Aorta (tissue), 5 donors: ENCODE measurements at regions of chr5 and their contacts with region 1.

Region 1: DNA sequence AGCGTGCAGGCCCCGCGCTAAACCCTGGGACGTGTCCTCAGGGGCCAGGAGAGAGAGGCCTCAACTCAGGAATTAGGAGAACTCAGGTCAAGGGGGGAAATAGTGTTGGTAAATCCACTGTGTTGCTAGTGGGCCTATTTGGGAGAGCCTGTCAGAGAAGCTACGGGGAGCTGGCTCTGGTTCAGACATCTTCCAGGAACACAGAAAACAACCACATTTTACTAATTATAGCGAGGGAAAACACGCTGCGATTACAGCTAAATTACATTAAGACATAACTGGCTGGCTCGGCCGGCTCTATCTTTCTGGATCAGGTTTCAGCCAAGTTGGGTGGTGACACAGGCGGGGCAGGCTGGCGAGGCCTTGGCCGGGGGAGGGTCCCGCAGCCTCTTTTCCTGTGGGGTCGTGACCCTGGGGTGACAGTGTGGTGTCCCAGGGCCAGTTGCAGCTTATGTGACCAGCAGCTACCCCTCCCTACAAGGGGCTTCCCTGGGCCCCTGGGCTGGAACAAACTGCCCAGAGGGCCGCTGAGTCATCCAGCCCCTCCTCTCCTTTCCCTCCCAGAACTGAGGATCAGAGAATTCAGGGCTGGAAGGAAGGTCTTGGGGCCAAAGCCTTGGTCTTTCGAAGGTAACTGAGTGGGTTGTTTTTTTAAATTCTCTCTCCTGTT is 75.1 kb downstream of the FGF18 start:
- DNase-seq: peak; percentile 85 to 90
- ATAC-seq: peak; percentile 91
- H3K4me3 ChIP-seq: no peak overlapping the region
- H3K27ac ChIP-seq: peak overlapping the region; percentile 63 to 94
- H3K4me1 ChIP-seq: peaks cover 0 to 2% of the 10 kb centered on the region in 2 donors
- H3K27me3 ChIP-seq: no peaks in the 10 kb centered on the region

Region 2: DNA sequence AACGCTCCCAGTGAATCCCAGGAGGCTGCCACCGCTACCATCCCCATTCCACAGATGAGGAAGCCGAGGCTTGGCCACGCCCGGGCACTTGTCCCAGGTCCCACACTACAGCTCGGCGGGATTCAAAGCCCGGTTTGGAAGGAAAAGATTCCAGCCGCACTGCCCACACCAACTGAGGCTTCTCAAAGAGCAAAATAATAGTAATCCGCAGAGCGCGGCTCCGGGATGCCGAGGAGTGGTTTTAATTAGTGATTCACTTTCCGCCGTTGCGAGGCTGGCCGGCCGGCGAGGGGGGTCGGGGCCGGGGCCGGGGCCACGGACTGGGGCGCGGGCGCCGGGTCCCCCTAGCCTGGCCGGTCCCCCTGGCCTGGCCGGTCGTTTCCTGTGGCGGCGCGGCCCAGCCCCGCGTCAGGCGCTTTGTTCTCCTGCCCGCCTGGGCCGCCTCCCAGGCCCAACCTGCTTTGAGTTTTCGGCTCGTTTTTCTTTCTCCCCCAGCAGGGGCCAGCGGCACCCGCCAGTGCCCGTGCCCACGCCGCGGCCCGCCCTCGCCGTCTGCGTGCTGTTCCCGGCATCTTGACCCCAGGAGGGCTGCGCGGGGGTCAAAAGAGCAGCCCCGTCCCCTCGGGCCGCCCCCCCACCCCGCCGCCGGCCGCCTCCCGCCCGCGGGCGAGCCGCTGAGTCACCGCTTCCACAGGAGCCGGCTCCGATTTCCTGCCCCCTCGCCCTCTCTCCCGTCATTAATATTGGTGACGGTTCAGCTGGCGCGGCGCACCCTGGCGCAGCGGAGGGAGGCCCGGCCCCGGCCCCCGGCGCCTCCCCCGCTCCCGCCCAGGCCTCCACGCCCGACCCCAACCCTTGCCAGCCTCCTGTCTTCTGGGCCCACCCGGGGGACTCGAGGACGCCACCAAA is 43.9 kb before region 1 on chr5:
- intact Hi-C with region 1: loop called in 1 of 2 experiments (anchors 5 kb)
- DNase-seq: peak; percentile 87 to 95
- ATAC-seq: peak; percentile 83
- H3K4me3 ChIP-seq: peak overlapping the region; percentile 28 to 38
- H3K27ac ChIP-seq: peak overlapping the region; percentile 6 to 27
- H3K4me1 ChIP-seq: no peaks in the 10 kb centered on the region
- H3K27me3 ChIP-seq: no peaks in the 10 kb centered on the region

Region 3: GRCh38 chr5:171633816-171634470 is 139.4 kb after region 1 on chr5:
- intact Hi-C with region 1: no loop called
- DNase-seq: no peak
- ATAC-seq: peak; percentile 50
- H3K4me3 ChIP-seq: no peak overlapping the region
- H3K27ac ChIP-seq: no peak overlapping the region
- H3K4me1 ChIP-seq: no peaks in the 10 kb centered on the region
- H3K27me3 ChIP-seq: no peaks in the 10 kb centered on the region

Region 4: DNA sequence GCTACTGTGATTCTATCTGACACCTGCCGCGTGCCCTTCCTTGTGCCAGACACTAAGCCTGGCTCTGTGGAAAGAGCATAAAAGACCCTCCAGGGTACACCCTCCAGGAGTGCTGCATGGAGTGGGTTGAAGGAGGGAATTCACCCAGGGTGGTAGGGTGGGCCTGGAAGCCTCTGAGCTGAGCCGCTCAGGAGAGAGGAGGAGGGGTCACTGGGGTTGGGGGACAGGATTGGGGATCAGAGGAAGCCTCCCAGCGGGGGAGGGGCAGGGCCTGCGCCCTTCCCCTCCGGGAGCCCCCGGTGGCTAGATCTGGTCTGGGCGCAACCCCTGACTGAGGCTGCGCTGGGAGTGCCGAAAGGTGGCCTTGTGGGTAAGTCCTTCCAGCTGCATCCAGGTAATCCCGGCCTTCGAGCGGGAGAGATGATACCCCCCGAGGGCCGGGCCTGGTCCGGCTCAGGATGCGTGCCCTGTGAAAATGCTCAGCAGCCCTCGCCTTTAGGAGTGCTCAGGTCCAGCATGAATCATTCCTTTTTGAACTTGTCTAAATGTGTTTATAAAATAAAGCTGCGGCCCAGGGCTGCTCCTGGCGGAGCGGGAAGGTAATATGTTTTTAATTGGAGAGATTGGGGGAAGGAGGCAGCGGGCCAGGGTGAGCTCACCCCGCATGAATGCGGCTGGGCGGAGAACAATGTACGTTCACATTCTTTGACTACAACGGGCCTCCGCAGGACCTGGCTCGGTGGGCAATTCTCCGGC is 172.9 kb after region 1 on chr5:
- intact Hi-C with region 1: no loop called
- DNase-seq: peak; percentile 84 to 92
- ATAC-seq: peak; percentile 87
- H3K4me3 ChIP-seq: no peak overlapping the region
- H3K27ac ChIP-seq: peak overlapping the region in 1 of 2 donors; percentile 23
- H3K4me1 ChIP-seq: no peaks in the 10 kb centered on the region
- H3K27me3 ChIP-seq: no peaks in the 10 kb centered on the region